Upper lobe of right lung (tissue), 1 donor: ENCODE measurements at regions of chr10 and their contacts with region 1.

Region 1: DNA sequence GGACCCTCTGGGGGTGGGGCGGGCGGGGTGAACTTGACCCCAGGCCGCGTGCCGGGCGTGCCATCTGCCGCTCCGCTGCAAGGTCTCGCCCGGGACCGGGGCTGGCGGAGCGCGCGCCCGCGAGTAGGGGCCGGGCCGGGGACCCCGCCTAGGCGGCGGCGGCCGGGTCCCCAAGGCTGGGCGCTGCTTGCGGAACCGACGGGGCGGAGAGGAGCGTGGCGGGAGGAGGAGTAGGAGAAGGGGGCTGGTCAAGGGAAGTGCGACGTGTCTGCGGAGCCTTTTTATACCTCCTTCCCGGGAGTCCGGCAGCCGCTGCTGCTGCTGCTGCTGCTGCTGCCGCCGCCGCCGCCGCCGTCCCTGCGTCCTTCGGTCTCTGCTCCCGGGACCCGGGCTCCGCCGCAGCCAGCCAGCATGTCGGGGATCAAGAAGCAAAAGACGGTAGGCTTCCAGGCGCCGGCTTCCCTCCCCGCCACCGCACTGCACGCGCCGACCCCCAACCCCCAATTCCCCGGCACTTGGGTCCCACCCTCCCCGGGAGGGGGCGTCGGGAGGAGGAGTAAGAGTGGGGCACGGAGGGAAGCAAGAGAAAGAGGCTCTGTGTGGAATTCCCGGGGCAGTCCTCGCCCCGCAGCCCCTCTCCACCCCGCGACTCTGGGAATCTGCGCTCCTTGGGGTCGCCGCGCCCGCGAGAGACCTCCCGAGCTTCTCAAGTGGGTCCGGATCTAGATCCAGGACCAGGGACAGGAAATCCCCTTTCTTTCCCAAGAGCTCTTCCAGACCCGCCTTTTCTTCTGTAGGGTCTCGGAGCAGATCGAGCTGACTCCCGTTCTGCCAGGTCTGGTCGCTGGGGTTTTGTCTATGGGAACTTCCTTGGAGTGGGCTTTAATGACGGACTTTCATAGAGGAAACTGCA is at the start of gene PAPSS2:
- DNase-seq: peak; percentile 89
- ATAC-seq: peak; percentile 92
- H3K4me3 ChIP-seq: peak within 1 kb of the TSS; percentile 73
- H3K27ac ChIP-seq: peak within 1 kb of the TSS; percentile 88
- H3K4me1 ChIP-seq: peaks cover 15% of the 10 kb centered on the region
- H3K27me3 ChIP-seq: no peaks in the 10 kb centered on the region
- CTCF ChIP-seq: no peak
- total RNA-seq, gene PAPSS2: 210 TPM

Region 2: DNA sequence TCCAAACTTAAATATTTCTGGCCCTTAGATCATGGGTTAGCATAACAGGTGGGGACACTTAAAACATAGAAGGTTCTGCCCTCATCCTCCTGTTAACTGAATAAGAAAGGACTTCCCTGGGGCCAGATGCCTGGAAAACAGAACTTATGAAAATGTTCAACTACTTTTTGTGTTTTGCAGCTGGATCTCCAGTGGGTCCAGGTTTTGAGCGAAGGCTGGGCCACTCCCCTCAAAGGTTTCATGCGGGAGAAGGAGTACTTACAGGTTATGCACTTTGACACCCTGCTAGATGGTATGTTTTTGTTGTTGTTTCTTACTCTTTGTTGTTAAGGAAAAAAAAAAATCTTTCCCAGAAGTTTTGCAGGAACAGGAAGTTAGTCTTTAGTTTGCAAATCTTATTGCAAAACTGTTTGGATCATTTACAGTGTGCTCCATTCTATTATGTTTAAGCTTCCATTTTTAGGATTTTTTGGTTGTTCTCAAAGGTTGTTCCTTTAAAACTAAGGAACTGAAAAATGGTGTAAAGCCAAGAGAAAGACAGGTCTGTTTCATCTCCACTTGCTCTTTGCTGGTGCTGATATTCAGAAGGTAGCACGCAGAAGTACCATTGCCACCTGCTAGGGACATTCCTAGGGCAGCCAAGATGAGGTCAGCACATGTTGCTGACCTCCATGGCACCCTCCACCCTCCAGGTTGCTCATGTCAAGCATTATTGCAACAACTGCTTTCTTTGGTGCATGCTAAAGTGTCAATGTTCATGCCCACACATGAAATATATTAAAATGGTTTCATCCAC is 55.9 kb after region 1 on chr10:
- intact Hi-C with region 1: loop called (anchors 10 kb)
- DNase-seq: no peak
- ATAC-seq: peak; percentile 30
- H3K4me3 ChIP-seq: no peak overlapping the region
- H3K27ac ChIP-seq: peak overlapping the region; percentile 59
- H3K4me1 ChIP-seq: peaks cover 17% of the 10 kb centered on the region
- H3K27me3 ChIP-seq: no peaks in the 10 kb centered on the region
- CTCF ChIP-seq: no peak